Psoas muscle (tissue), 8 donors: ENCODE measurements at regions of chr15 and their contacts with region 1.

Region 1: DNA sequence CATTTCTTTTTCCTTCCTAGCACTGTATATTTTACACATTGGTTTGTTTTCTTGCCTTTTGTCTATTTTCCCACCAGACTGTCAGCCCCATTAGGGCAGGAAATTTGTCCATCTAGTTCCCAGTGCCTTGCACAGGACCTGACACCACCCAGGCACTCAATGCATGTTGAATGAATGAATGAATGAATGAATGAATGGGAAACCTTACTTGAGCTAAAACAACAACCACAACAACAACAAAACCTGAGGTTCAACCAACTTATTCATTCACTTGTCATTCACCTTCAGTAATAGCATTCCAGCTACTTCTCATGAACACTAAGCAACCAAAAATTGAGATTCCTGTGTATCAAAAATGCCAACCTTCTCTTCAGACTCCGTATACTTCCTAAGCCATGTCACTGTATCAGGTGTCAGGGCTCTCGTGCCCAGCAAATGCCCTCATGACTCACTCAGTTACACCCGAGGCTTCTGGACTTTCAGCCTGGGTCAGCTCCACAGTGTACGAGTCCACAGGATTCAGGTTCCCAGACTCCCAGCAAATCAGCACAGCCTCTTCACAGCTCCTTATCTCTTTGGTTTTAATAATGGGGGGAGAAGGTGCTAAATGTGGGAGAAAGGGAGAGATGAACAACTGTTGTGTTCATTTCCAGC is 37.3 kb downstream of the FSD2 start:
- DNase-seq: peak; percentile 41 to 79
- ATAC-seq: peak; percentile 81 to 83 (median 83)
- H3K4me3 ChIP-seq: no peak overlapping the region
- H3K27ac ChIP-seq: peak overlapping the region; percentile 98
- H3K4me1 ChIP-seq: peaks cover 67% of the 10 kb centered on the region
- H3K27me3 ChIP-seq: no peaks in the 10 kb centered on the region
- CTCF ChIP-seq: no peak

Region 2: GRCh38 chr15:82122746-82123400 is 645.7 kb before region 1 on chr15:
- intact Hi-C with region 1: loop called in 1 of 2 experiments (anchors 10 kb)
- DNase-seq: peak; percentile 46 to 56
- ATAC-seq: peak; percentile 84 to 92 (median 92)
- H3K4me3 ChIP-seq: no peak overlapping the region
- H3K27ac ChIP-seq: peak overlapping the region; percentile 65
- H3K4me1 ChIP-seq: peaks cover 3% of the 10 kb centered on the region
- H3K27me3 ChIP-seq: no peaks in the 10 kb centered on the region
- CTCF ChIP-seq: no peak

Region 3: DNA sequence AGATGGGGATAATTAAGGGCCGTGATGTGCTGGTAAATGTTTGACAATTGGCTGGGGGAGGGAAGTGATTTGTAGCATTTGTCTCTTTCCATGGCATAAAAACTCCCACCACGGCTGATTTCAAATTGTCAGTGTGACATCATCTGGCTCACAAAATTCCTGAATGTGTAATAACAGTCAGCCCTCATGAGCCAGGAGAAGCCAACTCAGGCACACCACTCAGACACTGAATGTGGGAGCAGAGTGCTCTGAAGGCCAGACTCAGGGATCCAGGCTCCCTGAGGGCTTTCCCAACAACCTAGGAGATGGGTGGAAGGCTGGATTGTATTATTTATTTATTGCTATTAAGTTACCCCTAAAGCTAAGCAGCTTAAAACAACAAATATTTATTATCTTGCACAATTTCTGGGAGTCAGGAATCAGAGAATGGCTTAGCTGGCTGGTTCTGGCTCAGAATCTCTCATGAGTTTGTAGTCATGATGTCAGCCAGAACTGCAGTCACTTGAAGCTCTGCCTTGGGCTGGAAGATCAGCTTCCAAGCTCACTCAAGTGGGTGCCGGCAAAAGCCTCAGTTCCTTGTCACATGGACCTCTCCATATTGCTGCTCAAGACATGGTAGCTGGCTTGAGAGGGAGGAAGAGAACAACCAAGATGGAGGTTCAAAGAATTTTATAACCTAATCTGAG is 114.9 kb before region 1 on chr15:
- intact Hi-C with region 1: no loop called
- DNase-seq: no peak
- ATAC-seq: no peak
- H3K4me3 ChIP-seq: no peak overlapping the region
- H3K27ac ChIP-seq: no peak overlapping the region
- H3K4me1 ChIP-seq: no peaks in the 10 kb centered on the region
- H3K27me3 ChIP-seq: peaks cover 0 to 23% (median 0%) of the 10 kb centered on the region in 3 donors
- CTCF ChIP-seq: no peak

Region 4: DNA sequence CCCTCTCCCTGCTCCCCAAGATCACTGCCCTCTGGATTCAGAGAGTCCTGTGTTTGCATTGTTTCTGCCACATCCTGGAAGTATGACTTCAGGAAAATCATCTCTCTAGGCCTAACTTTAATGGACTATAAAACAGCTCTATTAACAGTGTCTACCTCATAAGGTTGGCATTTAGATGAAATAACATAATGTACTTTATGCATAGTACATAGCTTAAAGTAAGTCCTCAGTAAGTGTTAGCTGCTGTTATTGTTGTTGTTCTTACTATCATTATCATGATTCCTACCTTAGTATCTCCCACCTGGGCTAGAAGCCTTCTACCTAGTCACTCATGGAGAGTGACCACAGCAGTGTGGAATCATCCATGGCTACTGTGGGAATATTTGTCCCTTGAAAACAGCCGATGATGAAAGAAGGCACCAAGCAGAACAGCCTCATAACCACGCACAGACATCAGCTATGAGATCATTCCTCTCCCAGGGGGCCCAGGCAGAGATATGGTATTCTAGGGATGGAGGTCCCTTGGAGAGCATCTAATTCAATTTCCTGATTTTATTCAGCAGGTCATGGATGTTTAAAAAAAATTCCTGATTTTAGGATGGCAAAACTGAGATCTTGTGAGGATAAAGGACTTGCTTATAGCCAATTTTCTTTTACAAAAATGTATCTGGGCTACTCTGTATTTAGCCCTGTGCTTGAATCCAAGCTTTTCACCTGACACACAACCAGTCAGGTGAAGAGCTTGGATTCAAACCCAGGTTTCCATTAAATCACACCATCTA is 35.4 kb after region 1 on chr15:
- intact Hi-C with region 1: loop called (anchors 2 to 5 kb)
- DNase-seq: no peak
- ATAC-seq: peak; percentile 29 to 54 (median 40)
- H3K4me3 ChIP-seq: peak overlapping the region; percentile 68
- H3K27ac ChIP-seq: peak overlapping the region; percentile 100
- H3K4me1 ChIP-seq: peaks cover 69% of the 10 kb centered on the region
- H3K27me3 ChIP-seq: no peaks in the 10 kb centered on the region
- CTCF ChIP-seq: no peak